ENCODE measurements at regions of chr17 and their contacts with region 1.

Region 1: DNA sequence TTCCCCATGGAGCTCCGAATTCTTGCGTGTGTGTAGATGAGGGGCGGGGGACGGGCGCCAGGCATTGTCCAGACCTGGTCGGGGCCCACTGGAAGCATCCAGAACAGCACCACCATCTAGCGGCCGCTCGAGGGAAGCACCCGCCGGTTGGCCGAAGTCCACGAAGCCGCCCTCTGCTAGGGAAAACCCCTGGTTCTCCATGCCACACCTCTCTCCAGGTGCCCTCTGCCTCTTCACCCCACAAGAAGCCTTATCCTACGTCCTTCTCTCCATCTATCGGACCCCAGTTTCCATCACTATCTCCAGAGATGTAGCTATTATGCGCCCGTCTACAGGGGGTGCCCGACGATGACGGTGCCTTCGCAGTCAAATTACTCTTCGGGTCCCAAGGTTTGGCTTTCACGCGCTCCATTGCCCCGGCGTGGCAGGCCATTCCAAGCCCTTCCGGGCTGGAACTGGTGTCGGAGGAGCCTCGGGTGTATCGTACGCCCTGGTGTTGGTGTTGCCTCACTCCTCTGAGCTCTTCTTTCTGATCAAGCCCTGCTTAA is 617 bp upstream of the SENP3 start:
- DNase-seq: peak; percentile 94
- H3K4me3 ChIP-seq: peak overlapping the region; percentile 76 to 93
- H3K27ac ChIP-seq: peak overlapping the region; percentile 67 to 92
- H3K4me1 ChIP-seq: peaks cover 53% of the 10 kb centered on the region
- H3K27me3 ChIP-seq: no peaks in the 10 kb centered on the region
- CTCF ChIP-seq: peak; percentile 74 to 93 (median 92)
- POLR2A ChIP-seq: no peak

Region 2: GRCh38 chr17:7351665-7352501 is 209.2 kb before region 1 on chr17 and contains the start of gene KCTD11:
- intact Hi-C with region 1: loop called (anchors 10 kb)
- DNase-seq: peak; percentile 92
- H3K4me3 ChIP-seq: peak within 1 kb of the TSS; percentile 81 to 86
- H3K27ac ChIP-seq: peak within 1 kb of the TSS; percentile 87 to 98
- H3K4me1 ChIP-seq: peaks cover 24% of the 10 kb centered on the region
- H3K27me3 ChIP-seq: no peaks in the 10 kb centered on the region
- CTCF ChIP-seq: peak in 2 of 3 experiments; percentile 48 to 51
- POLR2A ChIP-seq: no peak
- total RNA-seq, gene KCTD11: 4.8 to 5.0 TPM

Region 3: DNA sequence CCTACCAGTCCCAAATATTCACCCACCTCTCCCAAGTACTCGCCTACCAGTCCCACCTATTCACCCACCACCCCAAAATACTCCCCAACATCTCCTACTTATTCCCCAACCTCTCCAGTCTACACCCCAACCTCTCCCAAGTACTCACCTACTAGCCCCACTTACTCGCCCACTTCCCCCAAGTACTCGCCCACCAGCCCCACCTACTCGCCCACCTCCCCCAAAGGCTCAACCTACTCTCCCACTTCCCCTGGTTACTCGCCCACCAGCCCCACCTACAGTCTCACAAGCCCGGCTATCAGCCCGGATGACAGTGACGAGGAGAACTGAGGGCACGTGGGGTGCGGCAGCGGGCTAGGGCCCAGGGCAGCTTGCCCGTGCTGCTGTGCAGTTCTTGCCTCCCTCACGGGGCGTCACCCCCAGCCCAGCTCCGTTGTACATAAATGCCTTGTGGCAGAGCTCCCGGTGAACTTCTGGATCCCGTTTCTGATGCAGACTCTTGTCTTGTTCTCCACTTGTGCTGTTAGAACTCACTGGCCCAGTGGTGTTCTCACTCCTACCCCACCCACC is 47.2 kb before region 1 on chr17:
- intact Hi-C with region 1: loop called (anchors 5 kb)
- DNase-seq: peak; percentile 38
- H3K4me3 ChIP-seq: no peak overlapping the region
- H3K27ac ChIP-seq: no peak overlapping the region
- H3K4me1 ChIP-seq: no peaks in the 10 kb centered on the region
- H3K27me3 ChIP-seq: no peaks in the 10 kb centered on the region
- CTCF ChIP-seq: no peak
- POLR2A ChIP-seq: no peak

Measured in testis (tissue), 5 donors.